ENCODE measurements at regions of chr2 and their contacts with region 1.

Region 1: DNA sequence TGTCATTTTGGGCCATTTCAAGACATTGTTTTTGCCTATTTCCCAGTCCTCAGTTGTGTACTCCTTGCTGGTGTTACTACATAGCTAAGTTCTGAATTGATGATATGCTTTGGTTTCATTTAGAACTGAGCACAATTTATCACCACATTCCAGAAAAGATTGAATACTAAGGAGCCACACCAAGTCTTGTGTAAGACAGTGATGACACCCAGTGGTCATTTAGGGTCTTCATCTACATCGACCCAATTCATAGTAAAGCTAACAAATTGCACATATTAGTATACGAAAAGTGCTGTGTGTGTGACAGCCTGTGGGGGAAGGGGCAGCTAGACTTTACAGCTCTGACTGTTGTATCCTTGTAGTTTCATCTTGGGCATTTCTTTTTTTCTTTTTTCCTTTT is 10.9 kb upstream of the DLX2 start:
- DNase-seq: peak in 1 of 9 donors; percentile 4
- ATAC-seq: no peak
- H3K4me3 ChIP-seq: no peak overlapping the region
- H3K4me3 Mint-ChIP-seq: no peak overlapping the region
- H3K27ac ChIP-seq: no peak overlapping the region
- H3K27ac Mint-ChIP-seq: no peak overlapping the region
- H3K4me1 ChIP-seq: no peaks in the 10 kb centered on the region
- H3K4me1 Mint-ChIP-seq: peaks cover 0 to 10% (median 3%) of the 10 kb centered on the region in 7 donors
- H3K27me3 ChIP-seq: peaks cover 0 to 2% of the 10 kb centered on the region in 2 donors
- H3K27me3 Mint-ChIP-seq: peaks cover 43 to 57% (median 45%) of the 10 kb centered on the region in 5 donors

Region 2: DNA sequence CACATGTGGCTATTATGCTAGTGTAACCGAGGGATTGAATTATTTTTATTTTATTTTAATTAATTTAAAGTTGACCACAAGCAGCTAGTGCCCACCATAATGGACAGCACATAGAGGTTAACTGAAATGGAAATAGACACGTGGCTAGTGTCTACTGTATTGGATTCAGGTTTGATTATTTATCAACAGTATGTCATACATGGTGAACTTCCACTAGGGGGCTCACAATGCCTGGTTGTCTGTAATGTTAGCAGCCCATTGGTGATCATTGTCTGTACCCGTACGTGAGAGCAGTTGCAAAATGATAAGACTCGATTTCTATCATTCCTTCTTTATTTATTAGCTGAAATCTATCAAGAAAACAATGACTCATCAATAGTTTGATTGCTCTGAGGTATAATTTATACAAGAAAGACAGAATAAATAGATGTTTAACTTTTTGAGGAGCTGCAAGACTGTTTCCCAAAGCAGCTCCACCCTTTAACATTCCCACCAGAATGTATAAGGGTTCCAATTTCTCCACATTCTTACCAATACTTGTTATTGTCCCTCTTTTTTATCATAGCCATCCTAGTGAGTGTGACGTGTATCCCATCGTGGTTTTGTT is 514.8 kb before region 1 on chr2:
- CTCF ChIA-PET with region 1: no interaction called
- POLR2A ChIA-PET with region 1: no interaction called
- intact Hi-C with region 1: loop called in 1 of 2 experiments (anchors 1 kb)
- DNase-seq: peak in 7 of 9 donors; percentile 22 to 64 (median 51)
- ATAC-seq: peak; percentile 94
- H3K4me3 ChIP-seq: no peak overlapping the region
- H3K4me3 Mint-ChIP-seq: no peak overlapping the region
- H3K27ac ChIP-seq: no peak overlapping the region
- H3K27ac Mint-ChIP-seq: no peak overlapping the region
- H3K4me1 ChIP-seq: peaks cover 0 to 3% of the 10 kb centered on the region in 2 donors
- H3K4me1 Mint-ChIP-seq: peaks cover 0 to 6% (median 0%) of the 10 kb centered on the region in 7 donors
- H3K27me3 ChIP-seq: no peaks in the 10 kb centered on the region
- H3K27me3 Mint-ChIP-seq: peaks cover 0 to 25% (median 4%) of the 10 kb centered on the region in 5 donors

Region 3: GRCh38 chr2:171811245-171811628 is 302.4 kb before region 1 on chr2:
- CTCF ChIA-PET with region 1: no interaction called
- POLR2A ChIA-PET with region 1: no interaction called
- intact Hi-C with region 1: loop called in 1 of 2 experiments (anchors 1 kb)
- DNase-seq: peak in 4 of 9 donors; percentile 3 to 28 (median 14)
- ATAC-seq: no peak
- H3K4me3 ChIP-seq: no peak overlapping the region
- H3K4me3 Mint-ChIP-seq: no peak overlapping the region
- H3K27ac ChIP-seq: no peak overlapping the region
- H3K27ac Mint-ChIP-seq: no peak overlapping the region
- H3K4me1 ChIP-seq: no peaks in the 10 kb centered on the region
- H3K4me1 Mint-ChIP-seq: no peaks in the 10 kb centered on the region
- H3K27me3 ChIP-seq: no peaks in the 10 kb centered on the region
- H3K27me3 Mint-ChIP-seq: no peaks in the 10 kb centered on the region